Transverse colon (tissue), 4 donors: ENCODE measurements at regions of chr12 and their contacts with region 1.

Region 1: GRCh38 chr12:30985814-30986452 is 59.4 kb downstream of the TSPAN11 start:
- DNase-seq: peak; percentile 23
- H3K4me3 ChIP-seq: no peak overlapping the region
- H3K27ac ChIP-seq: no peak overlapping the region
- H3K4me1 ChIP-seq: peaks cover 0 to 10% (median 4%) of the 10 kb centered on the region in 4 donors
- H3K27me3 ChIP-seq: no peaks in the 10 kb centered on the region
- CTCF ChIP-seq: peak; percentile 39 to 55 (median 48)
- EP300 ChIP-seq: no peak
- POLR2A ChIP-seq: no peak

Region 2: GRCh38 chr12:30643366-30643765 is 342.6 kb before region 1 on chr12:
- in situ Hi-C with region 1: no loop called
- intact Hi-C with region 1: no loop called
- DNase-seq: no peak
- H3K4me3 ChIP-seq: no peak overlapping the region
- H3K27ac ChIP-seq: no peak overlapping the region
- H3K4me1 ChIP-seq: no peaks in the 10 kb centered on the region
- H3K27me3 ChIP-seq: no peaks in the 10 kb centered on the region
- CTCF ChIP-seq: no peak
- EP300 ChIP-seq: no peak
- POLR2A ChIP-seq: no peak

Region 3: DNA sequence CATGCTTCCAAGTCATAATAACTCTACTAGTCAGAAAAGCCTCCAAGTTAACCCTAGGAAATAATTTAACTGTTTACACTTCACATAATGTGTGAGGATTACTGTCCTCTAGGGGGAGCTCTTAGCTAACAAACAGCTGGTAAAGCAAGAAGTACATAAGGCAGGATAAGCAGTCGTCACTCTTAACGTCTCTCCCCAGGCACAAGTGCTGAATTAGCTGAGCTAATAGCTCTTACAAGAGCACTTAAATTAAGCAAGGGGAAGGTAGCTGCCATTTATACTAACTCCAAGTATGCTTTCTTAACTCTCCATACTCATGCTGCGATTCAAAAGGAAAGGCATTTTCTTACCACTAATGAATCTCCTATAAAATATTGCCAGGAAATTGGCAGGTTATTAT is 138.7 kb before region 1 on chr12:
- in situ Hi-C with region 1: loop called in 1 of 4 experiments (anchors 25 kb)
- intact Hi-C with region 1: loop called (anchors 2 kb)
- DNase-seq: no peak
- H3K4me3 ChIP-seq: no peak overlapping the region
- H3K27ac ChIP-seq: no peak overlapping the region
- H3K4me1 ChIP-seq: peaks cover 0 to 5% (median 3%) of the 10 kb centered on the region in 4 donors
- H3K27me3 ChIP-seq: no peaks in the 10 kb centered on the region
- CTCF ChIP-seq: peak; percentile 63 to 76 (median 68)
- EP300 ChIP-seq: no peak
- POLR2A ChIP-seq: no peak

Region 4: DNA sequence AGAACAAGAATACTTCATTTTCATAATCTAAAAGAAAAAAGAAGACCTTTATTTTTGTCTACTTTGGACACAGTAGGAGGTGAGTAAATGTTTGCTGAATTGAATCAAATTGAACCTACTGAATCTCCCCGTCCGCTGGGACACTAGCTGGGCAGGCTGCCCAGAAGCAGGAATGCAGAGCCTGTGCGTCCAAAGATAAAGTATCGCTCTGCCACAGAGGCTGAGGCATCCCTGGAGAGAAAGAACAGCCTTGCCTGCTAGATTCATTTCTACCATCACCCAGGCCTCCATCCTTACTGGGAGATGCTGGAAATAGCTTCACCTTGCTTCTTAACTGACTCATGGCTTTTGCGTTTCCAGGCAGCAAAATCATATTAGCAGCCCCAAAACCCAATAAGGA is 123.4 kb before region 1 on chr12:
- in situ Hi-C with region 1: loop called in 1 of 4 experiments (anchors 25 kb)
- intact Hi-C with region 1: no loop called
- DNase-seq: no peak
- H3K4me3 ChIP-seq: no peak overlapping the region
- H3K27ac ChIP-seq: no peak overlapping the region
- H3K4me1 ChIP-seq: no peaks in the 10 kb centered on the region
- H3K27me3 ChIP-seq: no peaks in the 10 kb centered on the region
- CTCF ChIP-seq: no peak
- EP300 ChIP-seq: no peak
- POLR2A ChIP-seq: no peak

Region 5: GRCh38 chr12:31906557-31907301 is 920.8 kb after region 1 on chr12:
- in situ Hi-C with region 1: no loop called
- intact Hi-C with region 1: no loop called
- DNase-seq: no peak
- H3K4me3 ChIP-seq: no peak overlapping the region
- H3K27ac ChIP-seq: no peak overlapping the region
- H3K4me1 ChIP-seq: no peaks in the 10 kb centered on the region
- H3K27me3 ChIP-seq: no peaks in the 10 kb centered on the region
- CTCF ChIP-seq: no peak
- EP300 ChIP-seq: no peak
- POLR2A ChIP-seq: no peak